Activated naive CD4-positive, alpha-beta T cell treated with anti-CD3 and anti-CD28 coated beads for 36 hours (primary cell): ENCODE measurements at regions of chrX and their contacts with region 1.

Region 1: GRCh38 chrX:136246201-136246600 is 5.0 kb downstream of the MAP7D3 start:
- DNase-seq: no peak
- H3K4me3 Mint-ChIP-seq: no peak overlapping the region
- H3K27ac Mint-ChIP-seq: no peak overlapping the region
- H3K4me1 Mint-ChIP-seq: peaks cover 7% of the 10 kb centered on the region
- H3K27me3 Mint-ChIP-seq: no peaks in the 10 kb centered on the region

Region 2: GRCh38 chrX:136168929-136169735 is 77.1 kb before region 1 on chrX:
- CTCF ChIA-PET with region 1: no interaction called
- intact Hi-C with region 1: no loop called
- DNase-seq: no peak
- H3K4me3 Mint-ChIP-seq: no peak overlapping the region
- H3K27ac Mint-ChIP-seq: no peak overlapping the region
- H3K4me1 Mint-ChIP-seq: peaks cover 1% of the 10 kb centered on the region
- H3K27me3 Mint-ChIP-seq: no peaks in the 10 kb centered on the region

Region 3: GRCh38 chrX:136262812-136263315 is 16.7 kb after region 1 on chrX:
- CTCF ChIA-PET with region 1: interaction called, 3 read pairs
- intact Hi-C with region 1: loop called (anchors 2 kb)
- DNase-seq: no peak
- H3K4me3 Mint-ChIP-seq: no peak overlapping the region
- H3K27ac Mint-ChIP-seq: no peak overlapping the region
- H3K4me1 Mint-ChIP-seq: peaks cover 20% of the 10 kb centered on the region
- H3K27me3 Mint-ChIP-seq: no peaks in the 10 kb centered on the region

Region 4: GRCh38 chrX:136387951-136388502 is 141.8 kb after region 1 on chrX:
- CTCF ChIA-PET with region 1: no interaction called
- intact Hi-C with region 1: no loop called
- DNase-seq: no peak
- H3K4me3 Mint-ChIP-seq: no peak overlapping the region
- H3K27ac Mint-ChIP-seq: no peak overlapping the region
- H3K4me1 Mint-ChIP-seq: no peaks in the 10 kb centered on the region
- H3K27me3 Mint-ChIP-seq: peaks cover 5% of the 10 kb centered on the region

Region 5: DNA sequence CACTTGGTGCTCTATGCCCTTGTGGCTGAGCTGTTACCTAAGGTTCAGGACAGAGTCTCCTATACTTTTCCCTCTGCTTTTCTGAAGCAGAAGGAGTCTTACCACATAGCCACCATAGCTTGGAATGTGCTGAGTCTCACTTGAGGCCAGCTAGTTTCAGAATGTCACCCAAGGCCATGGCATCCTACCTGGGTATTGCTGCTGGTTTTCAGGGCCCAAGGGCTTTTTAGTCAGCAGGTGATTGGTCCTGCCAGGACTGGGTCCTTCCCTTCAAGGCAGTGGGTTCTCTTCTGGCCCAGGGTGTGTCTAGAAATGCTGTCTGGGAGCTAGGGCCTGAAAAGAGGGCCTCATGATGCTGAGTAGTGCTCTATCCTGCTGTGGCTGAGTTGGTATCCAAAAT is 318.5 kb after region 1 on chrX:
- CTCF ChIA-PET with region 1: no interaction called
- intact Hi-C with region 1: no loop called
- DNase-seq: no peak
- H3K4me3 Mint-ChIP-seq: no peak overlapping the region
- H3K27ac Mint-ChIP-seq: no peak overlapping the region
- H3K4me1 Mint-ChIP-seq: no peaks in the 10 kb centered on the region
- H3K27me3 Mint-ChIP-seq: no peaks in the 10 kb centered on the region